MCF 10A (cell line): ENCODE measurements at regions of chr17 and their contacts with region 1.

Region 1: GRCh38 chr17:40474419-40475002 is 26.9 kb downstream of the TNS4 start:
- DNase-seq: peak; percentile 70
- H3K4me3 Mint-ChIP-seq: no peak overlapping the region
- H3K27ac Mint-ChIP-seq: peak overlapping the region; percentile 73
- H3K4me1 Mint-ChIP-seq: peaks cover 43% of the 10 kb centered on the region
- H3K27me3 Mint-ChIP-seq: no peaks in the 10 kb centered on the region
- CTCF ChIP-seq: no peak

Region 2: DNA sequence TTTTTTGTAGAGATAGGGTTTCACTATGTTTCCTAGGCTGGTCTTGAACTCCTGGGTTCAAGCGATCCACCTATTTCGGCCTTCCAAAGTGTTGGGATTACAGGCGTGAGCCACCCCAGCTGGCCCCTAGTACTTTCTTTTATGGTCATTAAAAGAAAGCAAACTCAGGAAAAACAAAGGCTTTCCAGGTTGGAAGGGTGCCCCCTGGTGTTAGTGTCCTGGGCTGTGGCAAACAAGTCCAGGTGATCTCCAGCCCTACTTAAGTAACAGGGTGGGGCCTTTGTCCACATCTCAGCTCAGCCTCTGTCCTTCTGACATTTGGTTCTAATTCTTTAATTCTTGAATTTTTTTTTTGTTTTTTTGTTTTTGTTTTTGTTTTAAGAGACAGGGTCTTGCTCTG is 24.3 kb before region 1 on chr17:
- CTCF ChIA-PET with region 1: interaction called, 6 read pairs
- POLR2A ChIA-PET with region 1: interaction called, 79 read pairs
- intact Hi-C with region 1: no loop called
- DNase-seq: peak; percentile 65
- H3K4me3 Mint-ChIP-seq: no peak overlapping the region
- H3K27ac Mint-ChIP-seq: no peak overlapping the region
- H3K4me1 Mint-ChIP-seq: peaks cover 29% of the 10 kb centered on the region
- H3K27me3 Mint-ChIP-seq: peaks cover 21% of the 10 kb centered on the region
- CTCF ChIP-seq: peak; percentile 40

Region 3: DNA sequence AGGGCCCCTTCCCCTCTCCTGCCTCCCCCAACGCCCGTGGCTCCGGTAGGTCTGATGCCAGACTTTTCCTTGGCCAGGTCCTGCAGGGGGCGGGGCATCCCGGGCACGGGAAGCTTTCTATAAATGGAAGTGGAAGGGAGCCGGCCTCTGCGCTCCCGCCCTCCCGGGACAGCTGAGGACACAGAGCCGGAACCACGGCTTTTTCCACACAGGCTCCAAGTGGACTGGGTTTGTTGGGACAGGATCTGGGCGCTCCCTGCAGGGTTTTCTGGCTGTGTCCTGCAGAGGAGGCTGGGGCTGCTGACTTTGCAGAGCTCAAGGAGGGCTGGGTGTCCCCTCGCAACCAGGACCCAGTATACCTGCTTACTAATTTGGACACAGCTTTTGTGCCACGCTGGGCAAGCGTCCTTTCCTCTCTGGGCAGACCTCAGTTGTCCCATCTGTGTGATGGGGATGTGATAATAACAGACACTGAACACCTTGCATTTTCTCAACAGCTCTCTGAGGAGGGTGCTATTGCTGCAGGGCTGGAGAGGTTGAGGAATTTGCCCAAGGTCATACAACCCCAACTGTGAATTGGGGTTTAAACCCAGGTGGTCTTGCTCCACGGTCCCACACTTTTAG is 25.2 kb after region 1 on chr17:
- CTCF ChIA-PET with region 1: interaction called, 4 read pairs
- POLR2A ChIA-PET with region 1: interaction called, 703 read pairs
- intact Hi-C with region 1: loop called (anchors 2 kb)
- DNase-seq: peak; percentile 90
- H3K4me3 Mint-ChIP-seq: peak overlapping the region; percentile 98
- H3K27ac Mint-ChIP-seq: peak overlapping the region; percentile 97
- H3K4me1 Mint-ChIP-seq: peaks cover 39% of the 10 kb centered on the region
- H3K27me3 Mint-ChIP-seq: no peaks in the 10 kb centered on the region
- CTCF ChIP-seq: no peak

Region 4: DNA sequence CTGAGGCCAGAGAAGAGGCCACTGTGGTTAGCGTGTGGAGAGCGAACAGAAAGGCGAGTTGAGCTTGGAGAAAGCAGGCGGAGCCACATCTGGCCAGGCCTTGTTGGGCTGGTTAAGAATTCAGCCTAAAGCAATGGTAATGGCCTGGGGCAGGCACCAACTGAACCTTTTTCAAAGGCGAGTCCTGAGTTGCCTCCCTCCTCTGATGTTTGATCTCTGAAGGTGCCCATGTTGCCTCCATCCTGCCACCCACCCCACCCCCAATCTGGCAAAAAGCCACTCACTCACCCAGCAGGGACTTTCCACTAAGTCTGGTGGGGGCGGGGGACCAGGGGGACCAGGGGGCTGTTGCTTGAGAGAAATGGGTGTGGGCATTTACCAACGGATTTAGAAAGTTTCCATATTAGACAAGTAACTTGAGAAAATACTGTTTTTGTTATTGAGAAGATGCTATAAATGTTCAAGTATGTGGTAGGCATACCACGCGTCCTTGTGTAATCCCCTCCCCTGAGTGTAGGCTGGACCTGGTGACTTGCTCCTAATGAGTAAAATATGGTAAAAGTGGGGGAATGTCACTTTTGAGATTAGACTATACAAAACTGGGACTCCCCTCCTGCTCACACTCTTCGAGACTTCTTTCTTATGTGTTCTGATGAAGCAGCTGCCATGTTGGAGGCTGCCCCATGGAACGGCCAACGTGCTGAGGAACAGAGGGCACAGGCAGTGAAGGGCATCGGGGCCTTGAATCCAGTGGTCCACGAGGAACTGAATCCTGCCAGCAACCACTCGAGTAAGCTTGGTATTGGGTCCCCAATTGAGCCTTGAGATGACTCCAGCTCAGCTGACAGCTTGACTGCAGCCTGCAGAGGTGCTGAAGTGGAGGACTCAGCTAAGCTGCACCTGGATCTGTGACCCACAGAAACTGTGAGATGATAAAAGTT is 56.8 kb after region 1 on chr17:
- CTCF ChIA-PET with region 1: interaction called, 19 read pairs
- POLR2A ChIA-PET with region 1: interaction called, 472 read pairs
- intact Hi-C with region 1: loop called (anchors 1 kb)
- DNase-seq: no peak
- H3K4me3 Mint-ChIP-seq: no peak overlapping the region
- H3K27ac Mint-ChIP-seq: peak overlapping the region; percentile 24
- H3K4me1 Mint-ChIP-seq: peaks cover 37% of the 10 kb centered on the region
- H3K27me3 Mint-ChIP-seq: no peaks in the 10 kb centered on the region
- CTCF ChIP-seq: no peak

Region 5: GRCh38 chr17:40559954-40560591 is 85.6 kb after region 1 on chr17:
- CTCF ChIA-PET with region 1: interaction called, 7 read pairs
- POLR2A ChIA-PET with region 1: interaction called, 46 read pairs
- intact Hi-C with region 1: no loop called
- DNase-seq: peak; percentile 98
- H3K4me3 Mint-ChIP-seq: no peak overlapping the region
- H3K27ac Mint-ChIP-seq: peak overlapping the region; percentile 8
- H3K4me1 Mint-ChIP-seq: peaks cover 6% of the 10 kb centered on the region
- H3K27me3 Mint-ChIP-seq: peaks cover 41% of the 10 kb centered on the region
- CTCF ChIP-seq: peak; percentile 97

Region 6: GRCh38 chr17:41002814-41003213 is 528.3 kb after region 1 on chr17:
- CTCF ChIA-PET with region 1: no interaction called
- POLR2A ChIA-PET with region 1: no interaction called
- intact Hi-C with region 1: no loop called
- DNase-seq: peak; percentile 50
- H3K4me3 Mint-ChIP-seq: no peak overlapping the region
- H3K27ac Mint-ChIP-seq: no peak overlapping the region
- H3K4me1 Mint-ChIP-seq: peaks cover 18% of the 10 kb centered on the region
- H3K27me3 Mint-ChIP-seq: no peaks in the 10 kb centered on the region
- CTCF ChIP-seq: no peak